IMR-90 (cell line): ENCODE measurements at regions of chr3 and their contacts with region 1.

Region 1: DNA sequence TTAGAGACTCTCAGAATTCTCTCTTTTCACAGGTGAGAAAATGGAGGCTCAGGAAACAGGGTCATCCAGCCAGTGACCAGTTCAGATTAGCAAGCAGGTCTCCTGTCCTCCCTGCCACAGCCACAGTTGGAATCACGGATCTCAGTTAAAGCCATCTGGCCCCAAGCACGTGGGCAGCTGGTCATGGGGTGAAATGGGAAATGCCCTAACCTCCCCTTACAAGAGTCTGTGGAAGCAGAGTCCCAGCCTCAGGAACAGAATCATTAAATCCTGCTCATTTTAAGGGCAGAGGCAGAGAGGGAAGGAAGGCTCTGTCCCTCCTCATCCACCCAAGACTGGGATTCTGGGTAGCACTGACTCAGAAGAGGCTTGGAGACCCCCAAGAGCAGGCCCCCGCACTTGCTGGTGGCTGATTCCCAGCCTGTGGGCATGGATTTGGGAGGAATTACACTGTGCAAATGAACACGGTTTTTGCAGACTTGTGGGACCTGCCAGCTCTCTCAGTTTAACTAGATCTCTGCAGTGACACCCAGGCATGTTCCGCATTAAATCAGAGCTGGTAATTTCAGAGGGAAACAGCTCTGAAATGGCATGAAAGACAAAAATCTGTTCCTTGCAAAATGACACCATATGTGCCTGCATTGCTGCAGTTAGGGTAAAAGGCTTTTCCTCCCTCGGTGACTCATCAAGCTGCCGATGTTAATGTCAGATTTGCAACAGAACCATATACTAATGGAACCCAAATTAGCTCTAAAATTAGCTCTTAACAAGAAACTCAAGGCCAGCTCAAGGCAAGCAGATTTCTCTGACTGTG is 89.0 kb downstream of the BDH1 start:
- DNase-seq: peak; percentile 72
- ATAC-seq: peak; percentile 77
- H3K4me3 ChIP-seq: no peak overlapping the region
- H3K27ac ChIP-seq: 0 out of 2 replicates have a peak overlapping the region, but pooled peaks have one; percentile 5
- H3K4me1 ChIP-seq: peaks cover 13% of the 10 kb centered on the region
- H3K27me3 ChIP-seq: no peaks in the 10 kb centered on the region
- CTCF ChIP-seq: no peak
- POLR2A ChIP-seq: no peak
- RAD21 ChIP-seq: no peak

Region 2: DNA sequence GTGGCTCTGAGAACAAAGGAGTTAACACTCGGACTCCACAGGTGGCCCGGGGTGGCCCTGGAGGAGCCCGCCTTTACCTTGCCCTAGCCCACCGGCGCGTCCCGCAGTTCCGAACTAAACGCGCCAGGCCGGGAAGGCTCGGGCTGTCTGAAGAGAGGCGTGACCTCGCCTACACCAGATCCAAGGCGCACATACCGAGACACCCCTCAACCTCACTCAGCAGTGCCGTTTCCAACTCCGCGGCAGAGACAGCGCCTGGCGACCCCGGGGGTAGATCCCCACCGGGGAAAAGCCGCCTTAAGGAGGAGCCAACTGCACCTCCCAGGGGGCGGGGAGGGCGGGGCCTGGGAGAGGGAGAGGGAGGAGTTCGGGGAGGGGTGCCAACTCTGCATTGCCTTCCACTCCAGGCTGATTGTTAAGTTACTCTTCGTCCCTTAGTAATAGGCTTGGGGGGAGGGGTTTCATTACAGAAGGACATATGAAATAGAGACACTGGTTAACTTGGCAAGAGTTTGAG is 168.4 kb before region 1 on chr3 and contains the start of gene DLG1:
- CTCF ChIA-PET with region 1: no interaction called
- POLR2A ChIA-PET with region 1: interaction called, 12 read pairs
- dilution Hi-C with region 1: no loop called
- in situ Hi-C with region 1: no loop called
- intact Hi-C with region 1: loop called (anchors 5 kb)
- DNase-seq: peak; percentile 92
- ATAC-seq: peak; percentile 84
- H3K4me3 ChIP-seq: peak within 1 kb of the TSS; percentile 98
- H3K27ac ChIP-seq: peak within 1 kb of the TSS; percentile 68
- H3K4me1 ChIP-seq: peaks cover 8% of the 10 kb centered on the region
- H3K27me3 ChIP-seq: no peaks in the 10 kb centered on the region
- CTCF ChIP-seq: no peak
- POLR2A ChIP-seq: peak; percentile 84
- RAD21 ChIP-seq: no peak
- total RNA-seq, gene DLG1: 57.7 and 58.6 TPM in 2 replicates

Region 3: DNA sequence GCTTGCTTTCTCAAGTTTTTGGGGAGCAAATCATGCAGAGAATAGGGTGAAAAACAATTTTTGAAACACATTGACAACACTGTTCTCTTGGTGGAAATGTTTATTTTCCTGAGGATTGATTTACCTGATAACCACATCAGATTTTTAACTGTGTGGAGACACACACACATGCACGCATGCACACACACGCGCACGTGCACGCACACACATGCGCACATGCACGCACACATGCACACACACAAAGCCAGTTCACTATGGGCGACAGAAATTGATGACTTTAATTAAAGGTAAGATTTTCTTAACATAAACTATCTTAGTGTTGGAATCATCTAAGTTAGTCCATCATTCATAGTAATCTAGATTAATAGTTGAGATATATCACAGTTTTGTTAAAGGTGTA is 508.5 kb after region 1 on chr3:
- CTCF ChIA-PET with region 1: no interaction called
- POLR2A ChIA-PET with region 1: interaction called, 15 read pairs
- dilution Hi-C with region 1: no loop called
- in situ Hi-C with region 1: no loop called
- intact Hi-C with region 1: no loop called
- DNase-seq: no peak
- ATAC-seq: no peak
- H3K4me3 ChIP-seq: no peak overlapping the region
- H3K27ac ChIP-seq: no peak overlapping the region
- H3K4me1 ChIP-seq: no peaks in the 10 kb centered on the region
- H3K27me3 ChIP-seq: no peaks in the 10 kb centered on the region
- CTCF ChIP-seq: no peak
- POLR2A ChIP-seq: no peak
- RAD21 ChIP-seq: no peak